ENCODE measurements at regions of chr5 and their contacts with region 1.

Region 1: DNA sequence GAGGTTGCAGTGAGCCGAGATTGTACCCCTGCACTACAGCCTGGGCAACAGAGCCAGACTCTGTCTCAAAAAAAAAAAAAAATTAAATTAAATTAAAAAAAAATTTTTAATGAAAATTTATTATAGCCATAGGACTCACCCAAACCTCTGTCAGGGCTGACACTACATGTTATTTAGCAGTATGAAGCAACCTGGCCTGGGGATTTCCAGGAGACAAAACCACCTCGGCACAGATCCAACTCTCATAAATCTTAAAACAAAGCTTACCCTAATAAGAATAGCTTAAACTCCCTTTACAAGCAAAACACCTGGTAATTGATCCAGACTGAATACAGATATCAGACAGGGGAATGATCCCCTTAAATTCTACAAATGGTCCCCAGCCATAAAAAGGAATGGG is 38.4 kb downstream of the PPP1R2B start:
- DNase-seq: no peak
- H3K4me3 ChIP-seq: no peak overlapping the region
- H3K4me3 Mint-ChIP-seq: no peak overlapping the region
- H3K27ac ChIP-seq: no peak overlapping the region
- H3K27ac Mint-ChIP-seq: peak overlapping the region in 1 of 8 donors; percentile 73
- H3K4me1 ChIP-seq: peaks cover 12% of the 10 kb centered on the region
- H3K4me1 Mint-ChIP-seq: peaks cover 16 to 20% (median 19%) of the 10 kb centered on the region in 3 donors
- H3K27me3 ChIP-seq: no peaks in the 10 kb centered on the region
- H3K27me3 Mint-ChIP-seq: peaks cover 7 to 8% of the 10 kb centered on the region in 2 donors

Region 2: DNA sequence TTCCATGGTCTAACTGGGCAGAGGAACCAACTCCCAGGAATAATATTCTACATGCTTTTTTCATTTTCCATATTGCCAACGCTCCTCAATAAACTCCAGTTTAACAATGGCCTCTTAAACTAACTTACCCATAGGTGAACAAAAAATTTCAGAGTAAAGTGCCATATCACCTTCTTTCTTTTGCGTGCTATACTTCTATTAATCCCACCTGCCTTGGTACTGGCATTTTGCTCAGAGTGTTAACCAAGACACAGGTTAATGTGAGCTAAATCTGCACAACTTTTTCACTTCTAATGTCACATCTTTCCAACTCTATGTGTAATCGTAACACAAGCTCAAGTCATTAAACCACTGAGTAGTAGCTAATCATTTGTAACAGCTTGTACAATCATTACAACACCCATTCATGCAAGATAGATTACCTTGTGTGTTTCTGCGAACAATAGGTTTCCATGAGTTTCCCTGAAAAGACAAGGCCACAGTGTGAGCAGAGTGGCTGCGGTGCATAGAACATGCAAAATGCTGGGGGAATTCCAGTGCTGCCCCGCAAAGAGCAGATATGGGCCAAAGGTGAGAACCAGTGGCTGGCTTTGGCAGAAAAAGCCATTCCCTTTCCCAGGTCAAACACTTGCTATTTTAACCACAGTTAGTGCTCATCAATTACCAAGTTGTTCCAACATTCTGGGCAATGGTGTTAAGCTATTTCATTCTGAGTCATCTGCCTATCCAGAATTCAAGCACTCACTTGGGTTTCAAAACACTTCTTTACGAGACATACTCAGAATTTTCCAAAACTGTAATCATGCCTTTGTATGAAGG is 31.7 kb after region 1 on chr5:
- CTCF ChIA-PET with region 1: no interaction called
- POLR2A ChIA-PET with region 1: interaction called, 10 read pairs
- DNase-seq: peak in 2 of 5 donors; percentile 17 to 51
- H3K4me3 ChIP-seq: no peak overlapping the region
- H3K4me3 Mint-ChIP-seq: peak overlapping the region; percentile 13 to 54 (median 47)
- H3K27ac ChIP-seq: no peak overlapping the region
- H3K27ac Mint-ChIP-seq: peak overlapping the region in 7 of 8 donors; percentile 30 to 84 (median 66)
- H3K4me1 ChIP-seq: peaks cover 28% of the 10 kb centered on the region
- H3K4me1 Mint-ChIP-seq: peaks cover 45 to 67% (median 65%) of the 10 kb centered on the region in 3 donors
- H3K27me3 ChIP-seq: no peaks in the 10 kb centered on the region
- H3K27me3 Mint-ChIP-seq: no peaks in the 10 kb centered on the region